ENCODE measurements at regions of chr9 and their contacts with region 1.

Region 1: DNA sequence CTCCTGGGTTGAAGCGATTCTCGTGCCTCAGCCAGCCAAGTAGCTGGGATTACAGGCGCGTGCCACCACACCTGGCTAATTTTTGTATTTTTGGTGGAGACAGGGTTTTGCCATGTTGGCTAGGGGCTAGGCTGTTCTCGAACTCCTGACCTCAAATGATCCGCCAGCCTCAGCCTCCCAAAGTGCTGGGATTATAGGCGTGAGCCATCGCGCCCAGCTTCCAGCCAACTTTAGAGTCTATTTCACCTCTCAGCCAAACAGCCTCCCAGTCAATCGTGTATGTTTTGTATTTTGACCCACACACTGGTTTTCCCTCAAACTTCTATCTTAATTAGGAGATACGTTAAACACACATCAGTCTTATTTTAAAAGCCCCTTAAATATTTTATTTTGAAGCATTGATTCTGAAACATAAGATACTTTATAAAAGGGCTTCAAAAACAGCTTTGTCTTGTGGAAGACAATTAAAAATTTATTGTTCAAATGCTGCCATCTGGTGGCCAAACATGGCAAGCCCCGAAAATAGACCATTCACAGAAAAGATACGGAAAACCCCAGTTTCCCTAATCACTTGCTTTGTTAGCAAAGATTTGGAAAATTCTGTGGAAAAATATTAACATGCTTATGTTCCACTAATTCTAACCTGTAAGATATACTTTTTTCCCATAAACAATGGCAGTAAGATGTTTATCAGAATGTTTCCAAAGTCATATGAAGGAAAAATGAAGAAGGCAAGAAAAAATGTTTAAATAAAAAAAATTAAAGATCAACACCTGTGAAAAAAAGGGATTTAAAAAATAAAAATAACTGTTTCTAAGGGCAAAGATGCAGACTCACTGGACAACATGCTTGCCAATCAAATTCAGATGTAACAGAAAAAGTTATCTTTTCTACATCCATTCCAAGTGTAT is 33.1 kb downstream of the APTX start:
- DNase-seq: peak; percentile 82
- H3K4me3 ChIP-seq: no peak overlapping the region
- H3K27ac ChIP-seq: no peak overlapping the region
- H3K4me1 ChIP-seq: no peaks in the 10 kb centered on the region
- H3K27me3 ChIP-seq: no peaks in the 10 kb centered on the region
- CTCF ChIP-seq: peak; percentile 85 to 92 (median 87)
- POLR2A ChIP-seq: no peak

Region 2: GRCh38 chr9:32378993-32379729 is 589.2 kb before region 1 on chr9:
- intact Hi-C with region 1: loop called (anchors 10 kb)
- DNase-seq: peak; percentile 46
- H3K4me3 ChIP-seq: no peak overlapping the region
- H3K27ac ChIP-seq: no peak overlapping the region
- H3K4me1 ChIP-seq: peaks cover 6% of the 10 kb centered on the region
- H3K27me3 ChIP-seq: no peaks in the 10 kb centered on the region
- CTCF ChIP-seq: peak; percentile 60 to 79 (median 71)
- POLR2A ChIP-seq: no peak

Region 3: DNA sequence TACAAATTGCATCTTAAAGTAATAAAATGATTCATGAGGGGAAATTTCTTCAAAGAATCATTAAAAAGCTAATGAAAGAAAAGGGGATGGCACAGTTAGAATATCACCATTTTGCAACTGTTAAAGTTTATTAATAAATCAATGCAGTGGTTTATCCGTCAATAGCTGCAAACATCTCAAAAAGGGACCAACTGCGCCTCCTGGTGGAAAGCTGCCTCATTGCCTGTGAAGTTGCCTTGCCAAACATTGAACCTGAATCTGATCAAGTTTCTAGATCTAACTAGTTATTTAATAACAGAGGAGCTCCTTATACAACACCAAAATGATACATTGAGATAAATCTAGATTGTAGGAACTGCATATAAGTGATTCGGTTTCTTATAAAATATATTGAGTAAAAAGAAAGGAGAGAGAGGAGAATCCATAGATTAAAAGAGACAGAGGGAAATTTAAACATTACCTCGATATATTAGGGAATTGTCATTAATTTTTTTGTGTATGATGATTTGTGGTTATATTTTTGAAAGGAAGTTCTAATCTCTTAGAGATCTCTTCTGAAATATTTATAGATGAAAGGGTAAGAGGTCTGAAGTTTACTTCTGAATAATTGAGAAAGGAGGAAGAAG is 388.5 kb before region 1 on chr9:
- intact Hi-C with region 1: loop called (anchors 10 kb)
- DNase-seq: peak; percentile 88
- H3K4me3 ChIP-seq: no peak overlapping the region
- H3K27ac ChIP-seq: peak overlapping the region in 1 of 2 donors; percentile 15
- H3K4me1 ChIP-seq: peaks cover 5% of the 10 kb centered on the region
- H3K27me3 ChIP-seq: no peaks in the 10 kb centered on the region
- CTCF ChIP-seq: peak; percentile 82 to 91 (median 90)
- POLR2A ChIP-seq: no peak